BJ (cell line): ENCODE measurements at regions of chr9 and their contacts with region 1.

Region 1: GRCh38 chr9:92716557-92716956 is 46.6 kb upstream of the IPPK start:
- DNase-seq: no peak
- H3K4me3 ChIP-seq: no peak overlapping the region
- H3K27me3 ChIP-seq: no peaks in the 10 kb centered on the region
- CTCF ChIP-seq: peak; percentile 92

Region 2: GRCh38 chr9:92706216-92706940 is 10.2 kb before region 1 on chr9:
- CTCF ChIA-PET with region 1: interaction called, 10 read pairs
- POLR2A ChIA-PET with region 1: no interaction called
- DNase-seq: no peak
- H3K4me3 ChIP-seq: no peak overlapping the region
- H3K27me3 ChIP-seq: no peaks in the 10 kb centered on the region
- CTCF ChIP-seq: peak; percentile 29; the same call in 1 of the 2 replicates

Region 3: DNA sequence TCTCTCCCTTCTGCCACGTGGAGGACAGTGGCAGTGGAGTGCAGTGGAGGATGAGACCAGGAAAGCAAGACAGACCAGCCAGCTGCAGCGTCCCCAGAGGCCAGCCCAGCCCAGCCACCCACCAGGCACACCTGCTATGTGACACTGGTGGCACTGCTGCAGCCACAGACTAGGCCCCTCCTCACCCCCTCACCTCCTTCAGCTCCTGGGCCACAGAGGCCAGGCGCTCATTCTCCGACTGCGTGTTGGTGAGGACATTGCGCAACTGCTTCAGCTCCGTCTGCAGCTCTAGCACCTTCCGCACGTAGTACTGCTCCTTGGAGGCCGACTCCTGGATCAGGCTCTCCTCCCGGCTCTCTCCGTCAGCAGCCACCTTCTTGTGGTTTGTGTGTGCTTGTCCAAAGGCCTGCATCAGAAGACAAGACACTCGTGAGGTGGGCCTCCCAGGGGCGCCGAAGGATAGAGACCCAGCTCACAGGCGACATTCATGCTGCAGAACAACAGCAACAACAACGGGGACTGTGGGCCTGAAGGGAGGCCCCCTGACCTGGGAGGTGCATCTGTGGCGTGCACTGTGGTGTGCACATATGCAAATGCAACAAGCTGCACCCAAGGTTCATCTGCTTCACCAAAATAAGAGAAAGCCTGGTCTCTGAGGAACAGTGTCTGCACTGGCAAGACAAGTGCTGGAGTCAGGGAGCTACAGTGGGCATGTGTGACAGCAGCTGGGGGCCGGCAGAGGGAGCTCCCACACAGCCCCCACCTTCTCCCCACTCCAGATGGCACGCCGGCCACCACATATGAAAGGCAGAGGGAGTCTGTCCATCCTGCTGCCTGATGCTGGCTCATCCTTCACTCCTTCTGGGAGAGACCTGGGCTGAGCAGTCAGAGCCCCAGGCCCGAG is 12.5 kb after region 1 on chr9:
- CTCF ChIA-PET with region 1: interaction called, 34 read pairs
- POLR2A ChIA-PET with region 1: no interaction called
- DNase-seq: no peak
- H3K4me3 ChIP-seq: no peak overlapping the region
- H3K27me3 ChIP-seq: no peaks in the 10 kb centered on the region
- CTCF ChIP-seq: peak; percentile 72

Region 4: DNA sequence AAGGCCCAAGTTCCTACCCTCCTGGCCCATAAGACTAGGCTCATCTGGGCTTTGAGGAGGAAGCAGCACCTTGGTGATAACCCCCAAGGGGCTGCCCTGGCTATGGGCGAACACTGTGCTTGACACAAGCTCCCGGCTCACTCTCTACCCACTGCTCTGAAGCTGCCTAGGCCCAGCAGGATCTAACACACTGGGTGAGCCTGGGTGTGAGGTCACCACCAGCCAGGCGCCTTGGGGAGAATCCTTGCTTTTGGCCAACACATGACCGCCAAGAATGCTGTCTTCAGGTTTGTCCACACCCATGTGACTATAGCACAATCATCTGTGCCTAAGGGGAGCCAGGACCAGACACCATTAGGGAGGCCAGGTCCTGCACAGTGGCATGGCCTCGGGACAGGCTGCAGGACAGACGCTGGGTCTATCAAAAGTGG is 18.4 kb after region 1 on chr9:
- CTCF ChIA-PET with region 1: interaction called, 34 read pairs
- POLR2A ChIA-PET with region 1: no interaction called
- DNase-seq: no peak
- H3K4me3 ChIP-seq: no peak overlapping the region
- H3K27me3 ChIP-seq: no peaks in the 10 kb centered on the region
- CTCF ChIP-seq: no peak

Region 5: GRCh38 chr9:92790542-92791527 is 74.3 kb after region 1 on chr9:
- CTCF ChIA-PET with region 1: interaction called, 86 read pairs
- POLR2A ChIA-PET with region 1: no interaction called
- DNase-seq: no peak
- H3K4me3 ChIP-seq: no peak overlapping the region
- H3K27me3 ChIP-seq: peaks cover 12% of the 10 kb centered on the region
- CTCF ChIP-seq: peak; percentile 77

Region 6: GRCh38 chr9:93013856-93014582 is 297.5 kb after region 1 on chr9:
- CTCF ChIA-PET with region 1: no interaction called
- POLR2A ChIA-PET with region 1: no interaction called
- DNase-seq: no peak
- H3K4me3 ChIP-seq: no peak overlapping the region
- H3K27me3 ChIP-seq: no peaks in the 10 kb centered on the region
- CTCF ChIP-seq: no peak